ENCODE measurements at regions of chr3 and their contacts with region 1.

Region 1: GRCh38 chr3:62509956-62510355 is 136.6 kb upstream of the FEZF2 start:
- DNase-seq: no peak
- H3K4me3 ChIP-seq: no peak overlapping the region
- H3K27ac ChIP-seq: no peak overlapping the region
- H3K4me1 ChIP-seq: no peaks in the 10 kb centered on the region
- H3K27me3 ChIP-seq: no peaks in the 10 kb centered on the region
- CTCF ChIP-seq: no peak
- POLR2A ChIP-seq: no peak

Region 2: GRCh38 chr3:61043156-61043555 is 1466.8 kb before region 1 on chr3:
- intact Hi-C with region 1: no loop called
- DNase-seq: no peak
- H3K4me3 ChIP-seq: no peak overlapping the region
- H3K27ac ChIP-seq: no peak overlapping the region
- H3K4me1 ChIP-seq: no peaks in the 10 kb centered on the region
- H3K27me3 ChIP-seq: no peaks in the 10 kb centered on the region
- CTCF ChIP-seq: no peak
- POLR2A ChIP-seq: no peak

Region 3: GRCh38 chr3:62149962-62150361 is 360.0 kb before region 1 on chr3:
- intact Hi-C with region 1: no loop called
- DNase-seq: no peak
- H3K4me3 ChIP-seq: no peak overlapping the region
- H3K27ac ChIP-seq: peak overlapping the region in 1 of 2 donors; percentile 21
- H3K4me1 ChIP-seq: peaks cover 0 to 2% of the 10 kb centered on the region in 2 donors
- H3K27me3 ChIP-seq: no peaks in the 10 kb centered on the region
- CTCF ChIP-seq: no peak
- POLR2A ChIP-seq: no peak

Region 4: GRCh38 chr3:62439176-62439813 is 70.7 kb before region 1 on chr3:
- intact Hi-C with region 1: loop called (anchors 2 kb)
- DNase-seq: no peak
- H3K4me3 ChIP-seq: no peak overlapping the region
- H3K27ac ChIP-seq: no peak overlapping the region
- H3K4me1 ChIP-seq: no peaks in the 10 kb centered on the region
- H3K27me3 ChIP-seq: no peaks in the 10 kb centered on the region
- CTCF ChIP-seq: no peak
- POLR2A ChIP-seq: no peak

Measured in breast epithelium (tissue), 4 donors.